PC-3 (cell line): ENCODE measurements at regions of chr1 and their contacts with region 1.

Region 1: DNA sequence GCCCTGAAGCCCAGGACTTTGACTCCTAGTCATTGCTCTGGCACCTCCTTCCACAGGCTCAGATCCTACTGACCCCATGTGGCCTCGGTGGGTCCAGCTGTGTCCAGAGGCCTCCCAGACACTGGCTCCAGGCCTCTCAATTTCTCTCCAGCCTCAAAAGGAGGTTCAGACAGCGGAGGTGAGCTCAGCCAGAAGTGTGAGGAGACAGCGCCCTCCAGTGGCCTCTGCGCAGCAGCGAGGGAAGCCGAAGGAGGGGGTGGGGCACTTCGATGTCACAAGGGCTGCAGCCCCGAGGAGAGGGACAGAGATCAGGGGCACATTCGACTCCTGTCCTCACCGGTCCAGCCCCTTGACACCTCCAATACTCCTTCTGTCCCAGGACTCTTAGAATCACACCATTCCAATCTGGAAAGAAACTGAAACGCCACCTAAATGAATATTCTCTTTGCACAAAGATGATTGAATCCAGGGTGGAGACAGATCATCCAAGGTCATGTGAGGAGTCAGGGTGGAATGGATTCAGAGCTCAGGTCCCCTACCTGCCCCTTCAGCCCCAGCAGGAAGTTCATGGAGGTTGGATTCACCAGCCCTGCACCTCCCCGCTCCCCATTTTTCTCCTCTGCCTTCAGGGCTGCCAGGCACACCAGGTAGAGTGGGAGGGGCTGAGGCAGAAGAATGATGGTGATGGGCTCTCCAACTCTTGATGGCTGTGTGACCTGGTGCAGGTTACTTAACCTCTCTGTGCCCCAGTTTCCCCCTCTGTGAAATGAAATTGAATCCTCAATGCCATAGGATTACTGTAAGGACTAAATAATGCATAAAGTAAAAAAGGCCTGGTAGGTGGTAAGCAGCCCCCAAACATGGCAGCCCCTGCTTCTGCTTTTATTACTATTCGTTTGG is 34.8 kb upstream of the ZBTB40 start:
- DNase-seq: peak; percentile 82
- ATAC-seq: peak; percentile 45
- H3K4me3 ChIP-seq: no peak overlapping the region
- H3K27ac ChIP-seq: no peak overlapping the region
- H3K4me1 ChIP-seq: peaks cover 29% of the 10 kb centered on the region
- H3K27me3 ChIP-seq: no peaks in the 10 kb centered on the region
- CTCF ChIP-seq: peak; percentile 98

Region 2: DNA sequence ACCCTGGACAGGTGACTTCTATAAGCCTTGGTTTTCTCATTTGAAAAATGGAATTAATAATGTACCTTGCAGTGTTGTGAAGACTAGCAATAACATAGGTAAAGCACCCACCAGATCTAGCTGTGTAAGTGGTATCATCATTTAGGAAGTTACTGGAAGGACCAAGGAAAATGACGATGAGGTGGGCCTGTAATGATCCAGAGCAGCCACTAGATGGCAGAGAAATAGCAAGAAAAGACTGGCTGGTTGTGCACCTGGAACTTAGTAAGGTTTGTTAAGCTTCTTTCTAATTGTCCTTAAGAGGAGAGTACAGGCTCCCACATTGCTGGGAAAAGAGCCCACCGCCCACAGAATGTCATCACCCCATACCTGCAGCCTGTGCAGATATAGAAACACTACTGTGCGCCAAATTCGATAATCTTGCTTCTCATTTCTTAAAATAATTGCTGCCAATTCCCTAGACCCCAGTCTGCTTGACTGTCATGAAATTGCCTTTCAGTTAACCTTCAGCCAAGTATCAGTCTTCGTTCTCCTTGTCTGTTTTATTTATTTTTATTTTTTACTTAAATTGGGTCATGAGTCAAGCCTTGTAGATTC is 311.1 kb before region 1 on chr1:
- CTCF ChIA-PET with region 1: interaction called, 24 read pairs
- POLR2A ChIA-PET with region 1: no interaction called
- intact Hi-C with region 1: loop called (anchors 1 kb)
- DNase-seq: peak; percentile 75
- ATAC-seq: peak; percentile 63
- H3K4me3 ChIP-seq: no peak overlapping the region
- H3K27ac ChIP-seq: no peak overlapping the region
- H3K4me1 ChIP-seq: no peaks in the 10 kb centered on the region
- H3K27me3 ChIP-seq: no peaks in the 10 kb centered on the region
- CTCF ChIP-seq: peak; percentile 91

Region 3: GRCh38 chr1:22142315-22143064 is 274.3 kb before region 1 on chr1:
- CTCF ChIA-PET with region 1: interaction called, 10 read pairs
- POLR2A ChIA-PET with region 1: no interaction called
- intact Hi-C with region 1: no loop called
- DNase-seq: peak; percentile 30
- ATAC-seq: peak; percentile 54
- H3K4me3 ChIP-seq: peak overlapping the region; percentile 73
- H3K27ac ChIP-seq: no peak overlapping the region
- H3K4me1 ChIP-seq: peaks cover 14% of the 10 kb centered on the region
- H3K27me3 ChIP-seq: no peaks in the 10 kb centered on the region
- CTCF ChIP-seq: no peak; the same call in 1 of the 2 replicates

Region 4: DNA sequence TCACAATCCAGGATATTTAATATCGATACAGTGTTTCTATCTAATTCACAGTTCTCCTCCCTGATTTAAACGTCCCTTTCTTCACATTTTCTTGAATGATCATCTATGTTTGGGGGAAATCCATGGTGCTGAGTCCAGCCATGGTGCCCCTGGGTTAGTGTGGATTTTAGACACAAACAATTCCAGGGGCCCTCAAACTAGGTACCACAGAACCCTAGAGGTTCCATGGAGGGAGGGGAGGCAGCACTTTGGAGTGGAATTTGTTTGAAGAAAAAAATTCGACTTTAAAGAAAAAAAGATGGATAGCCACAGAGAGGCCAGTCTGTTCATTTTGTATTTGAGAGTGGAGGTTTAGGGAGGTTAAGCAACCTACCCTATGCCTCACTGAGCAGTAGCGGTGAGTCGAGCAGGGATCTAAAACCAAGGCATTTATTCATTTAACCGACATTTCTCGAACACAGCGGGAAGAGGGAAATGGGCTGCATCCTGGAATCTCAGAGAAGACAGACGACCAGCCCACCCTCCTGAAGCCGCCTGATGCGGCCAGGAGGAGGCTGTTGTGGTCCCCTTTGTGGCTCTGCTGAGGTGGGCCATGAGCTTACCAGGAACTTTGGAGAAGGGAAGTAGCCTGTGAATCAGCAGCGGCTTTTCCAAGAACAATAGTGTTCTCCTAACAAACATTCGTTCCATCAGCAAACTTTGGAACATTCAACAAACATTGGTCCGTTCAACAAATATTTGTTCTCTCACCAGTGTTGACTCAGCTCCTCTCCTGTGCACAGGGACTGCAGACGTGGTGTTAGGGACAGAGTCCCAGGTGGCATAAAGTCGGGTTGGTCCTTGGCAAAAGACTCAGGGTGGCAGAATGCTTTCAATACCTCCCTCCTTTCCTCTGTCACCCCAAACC is 68.7 kb before region 1 on chr1:
- CTCF ChIA-PET with region 1: no interaction called
- POLR2A ChIA-PET with region 1: no interaction called
- intact Hi-C with region 1: loop called (anchors 2 kb)
- DNase-seq: peak; percentile 91
- ATAC-seq: peak; percentile 96
- H3K4me3 ChIP-seq: peak overlapping the region; percentile 34; the same call in 1 of the 2 replicates
- H3K27ac ChIP-seq: peak overlapping the region; percentile 57
- H3K4me1 ChIP-seq: peaks cover 24% of the 10 kb centered on the region
- H3K27me3 ChIP-seq: peaks cover 32% of the 10 kb centered on the region
- CTCF ChIP-seq: no peak

Region 5: DNA sequence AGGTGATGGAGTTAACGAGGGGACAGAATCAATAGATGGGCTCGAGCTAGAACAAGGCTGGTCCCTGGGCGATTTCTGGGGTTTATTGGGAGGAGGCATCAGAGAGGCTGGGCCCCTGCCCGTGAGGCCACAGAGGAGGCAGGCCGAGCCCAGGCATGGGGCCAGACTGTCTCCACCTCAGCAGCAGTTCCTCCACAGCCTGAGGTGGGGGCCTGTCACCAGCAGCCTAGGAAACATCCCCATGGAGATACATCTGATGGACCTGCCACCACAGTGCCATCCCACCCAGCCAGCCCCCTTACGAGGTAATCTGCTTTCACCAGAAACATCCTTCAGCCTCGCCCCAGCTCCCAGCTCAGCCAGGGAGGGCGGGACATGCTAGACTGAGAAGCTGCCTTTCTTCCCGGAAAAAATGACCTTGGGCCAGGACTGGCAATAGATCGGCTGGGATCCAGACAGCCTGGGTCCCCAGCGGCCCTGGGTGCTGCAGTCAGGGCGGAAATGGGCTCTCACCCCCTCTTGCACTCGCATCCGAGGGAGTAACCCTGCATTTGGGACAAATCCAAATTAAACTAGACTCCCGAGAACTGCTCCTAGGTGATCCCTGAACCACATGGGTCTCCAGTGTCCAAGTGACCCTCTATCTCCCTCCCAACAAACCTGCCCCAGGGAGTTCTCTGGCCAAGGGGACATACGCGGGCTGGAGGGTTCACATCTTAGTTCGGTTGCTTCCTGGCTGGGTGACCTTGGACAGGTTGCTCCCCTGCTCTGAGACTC is 136.5 kb after region 1 on chr1:
- CTCF ChIA-PET with region 1: no interaction called
- POLR2A ChIA-PET with region 1: no interaction called
- intact Hi-C with region 1: no loop called
- DNase-seq: no peak
- ATAC-seq: no peak
- H3K4me3 ChIP-seq: no peak overlapping the region
- H3K27ac ChIP-seq: no peak overlapping the region
- H3K4me1 ChIP-seq: no peaks in the 10 kb centered on the region
- H3K27me3 ChIP-seq: peaks cover 4% of the 10 kb centered on the region
- CTCF ChIP-seq: no peak

Region 6: GRCh38 chr1:22676916-22677583 is 260.2 kb after region 1 on chr1:
- CTCF ChIA-PET with region 1: no interaction called
- POLR2A ChIA-PET with region 1: no interaction called
- intact Hi-C with region 1: no loop called
- DNase-seq: no peak
- ATAC-seq: no peak
- H3K4me3 ChIP-seq: no peak overlapping the region
- H3K27ac ChIP-seq: no peak overlapping the region
- H3K4me1 ChIP-seq: no peaks in the 10 kb centered on the region
- H3K27me3 ChIP-seq: no peaks in the 10 kb centered on the region
- CTCF ChIP-seq: no peak

Region 7: DNA sequence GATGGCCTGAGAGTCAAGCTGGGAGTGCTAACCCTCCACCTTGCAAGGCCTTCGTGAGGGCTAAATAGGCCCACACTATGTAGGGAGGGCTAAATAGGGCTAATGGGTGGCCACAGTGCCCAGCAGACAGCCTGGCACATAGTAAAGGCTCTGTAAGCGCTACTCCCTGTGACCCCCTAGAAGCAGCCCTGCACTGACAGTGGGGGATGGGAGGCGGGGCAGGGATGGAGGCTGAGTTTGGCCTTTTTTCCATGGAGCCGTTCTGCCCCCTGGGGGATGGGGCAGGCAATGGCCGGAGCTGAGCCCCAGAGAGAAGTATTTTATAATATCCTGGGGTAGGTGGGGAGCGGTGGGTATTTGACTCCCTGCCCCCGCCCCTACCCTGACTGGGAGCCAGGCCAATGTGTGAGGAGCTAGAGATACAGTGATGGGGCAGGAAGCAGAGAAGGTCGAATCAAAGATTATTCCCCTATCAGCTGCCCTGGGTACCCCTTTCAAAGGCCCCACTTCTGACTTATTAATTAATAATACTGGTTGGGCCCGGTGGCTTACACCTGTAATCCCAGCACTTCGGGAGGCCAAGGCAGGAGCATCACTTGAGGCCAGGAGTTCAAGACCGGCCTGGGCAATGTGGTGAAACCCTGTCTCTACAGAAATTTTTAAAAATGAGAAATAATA is 513.6 kb after region 1 on chr1:
- CTCF ChIA-PET with region 1: no interaction called
- POLR2A ChIA-PET with region 1: no interaction called
- intact Hi-C with region 1: loop called (anchors 10 kb)
- DNase-seq: peak; percentile 64
- ATAC-seq: peak; percentile 84
- H3K4me3 ChIP-seq: no peak overlapping the region
- H3K27ac ChIP-seq: no peak overlapping the region
- H3K4me1 ChIP-seq: no peaks in the 10 kb centered on the region
- H3K27me3 ChIP-seq: no peaks in the 10 kb centered on the region
- CTCF ChIP-seq: peak; percentile 86